PC-9 (cell line): ENCODE measurements at regions of chr14 and their contacts with region 1.

Region 1: DNA sequence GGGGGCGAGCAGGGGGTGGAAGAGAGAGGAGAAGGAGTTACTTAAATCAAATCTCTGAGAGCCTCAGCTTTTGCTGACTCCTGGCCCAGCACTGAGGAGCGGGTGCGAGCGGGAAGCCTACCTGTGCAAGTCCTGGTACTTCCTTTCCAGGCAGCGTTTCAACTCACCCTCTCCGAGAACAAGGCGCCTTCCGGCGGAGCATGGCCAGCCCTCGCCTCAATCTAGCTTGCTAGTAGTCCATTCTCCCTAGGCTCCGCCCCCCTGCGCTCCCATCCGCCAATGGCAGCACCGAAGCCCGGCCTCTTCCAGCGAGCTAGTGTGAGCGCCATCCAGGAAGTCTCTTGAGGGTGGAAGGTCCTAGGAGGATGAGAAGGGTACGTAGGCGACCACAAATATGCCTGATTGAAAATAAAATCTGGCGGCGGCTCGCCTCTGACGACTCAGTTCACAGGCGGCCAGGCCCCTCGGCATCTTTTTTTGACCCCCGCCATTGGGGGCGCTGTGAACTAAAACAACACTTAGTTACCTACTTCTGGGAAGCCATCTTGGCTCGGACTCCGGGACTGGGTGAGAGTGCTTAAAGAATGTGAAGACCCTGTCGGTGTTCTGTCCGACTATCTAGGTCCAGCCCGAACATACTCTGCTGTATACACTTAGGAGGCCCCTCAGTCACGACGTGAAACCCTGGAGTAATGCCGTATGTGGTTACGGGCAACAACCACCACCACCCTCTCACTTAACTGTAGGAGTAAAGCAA is at the start of gene CHD8:
- DNase-seq: peak; percentile 97
- H3K4me3 ChIP-seq: peak within 1 kb of the TSS; percentile 94
- H3K27ac ChIP-seq: peak within 1 kb of the TSS; percentile 92
- H3K4me1 ChIP-seq: no peaks in the 10 kb centered on the region; the same call in 1 of the 2 replicates
- H3K27me3 ChIP-seq: no peaks in the 10 kb centered on the region
- CTCF ChIP-seq: peak; percentile 71; the same call in 1 of the 2 replicates
- total RNA-seq, gene CHD8: 57.3 and 58.7 TPM in 2 replicates

Region 2: DNA sequence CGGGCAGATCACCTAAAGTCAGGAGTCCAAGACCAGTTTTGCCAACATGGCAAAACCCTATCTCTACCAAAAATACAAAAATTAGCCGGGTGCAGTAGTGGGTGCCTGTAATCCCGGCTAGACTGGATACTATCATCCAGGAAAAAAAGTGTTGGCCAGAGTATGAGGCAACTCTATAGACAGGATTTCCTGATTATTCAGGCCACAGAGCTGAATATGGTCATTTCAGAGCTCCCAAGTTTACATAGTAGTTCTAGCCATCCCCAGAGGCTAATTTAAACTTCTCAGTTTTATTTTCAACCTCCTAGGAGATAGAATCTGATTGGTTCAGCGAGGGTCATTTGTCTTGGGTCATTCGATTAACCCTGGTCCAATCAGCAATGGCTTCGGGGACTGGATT is 168.9 kb before region 1 on chr14:
- CTCF ChIA-PET with region 1: no interaction called
- POLR2A ChIA-PET with region 1: no interaction called
- intact Hi-C with region 1: no loop called
- DNase-seq: no peak
- H3K4me3 ChIP-seq: no peak overlapping the region
- H3K27ac ChIP-seq: no peak overlapping the region
- H3K4me1 ChIP-seq: no peaks in the 10 kb centered on the region
- H3K27me3 ChIP-seq: no peaks in the 10 kb centered on the region
- CTCF ChIP-seq: no peak

Region 3: GRCh38 chr14:21383848-21384493 is 72.1 kb before region 1 on chr14 and contains the start of gene SUPT16H:
- CTCF ChIA-PET with region 1: no interaction called
- POLR2A ChIA-PET with region 1: no interaction called
- intact Hi-C with region 1: loop called (anchors 2 kb)
- DNase-seq: peak; percentile 81 to 83
- H3K4me3 ChIP-seq: peak within 1 kb of the TSS; percentile 92
- H3K27ac ChIP-seq: peak within 1 kb of the TSS; percentile 73
- H3K4me1 ChIP-seq: peaks cover 7% of the 10 kb centered on the region; the same call in 1 of the 2 replicates
- H3K27me3 ChIP-seq: no peaks in the 10 kb centered on the region
- CTCF ChIP-seq: no peak
- total RNA-seq, gene SUPT16H: 57.2 and 65.4 TPM in 2 replicates

Region 4: GRCh38 chr14:21437063-21437901 is 18.8 kb before region 1 on chr14:
- CTCF ChIA-PET with region 1: interaction called, 8 read pairs
- POLR2A ChIA-PET with region 1: interaction called, 13 read pairs
- intact Hi-C with region 1: loop called (anchors 1 kb)
- DNase-seq: peak; percentile 92 to 94
- H3K4me3 ChIP-seq: peak overlapping the region; percentile 71
- H3K27ac ChIP-seq: peak overlapping the region; percentile 79
- H3K4me1 ChIP-seq: peaks cover 19% of the 10 kb centered on the region
- H3K27me3 ChIP-seq: no peaks in the 10 kb centered on the region
- CTCF ChIP-seq: no peak

Region 5: GRCh38 chr14:21476925-21477681 is 21.0 kb after region 1 on chr14 and contains the starts of genes RAB2B and TOX4:
- CTCF ChIA-PET with region 1: interaction called, 3 read pairs
- POLR2A ChIA-PET with region 1: no interaction called
- intact Hi-C with region 1: loop called (anchors 1 kb)
- DNase-seq: peak; percentile 91 to 92
- H3K4me3 ChIP-seq: peak within 1 kb of the TSS; percentile 92
- H3K27ac ChIP-seq: peak within 1 kb of the TSS; percentile 80
- H3K4me1 ChIP-seq: peaks cover 16% of the 10 kb centered on the region
- H3K27me3 ChIP-seq: no peaks in the 10 kb centered on the region
- CTCF ChIP-seq: peak; percentile 77
- total RNA-seq, gene RAB2B: 12.2 and 12.8 TPM in 2 replicates
- total RNA-seq, gene TOX4: 32.9 and 50.6 TPM in 2 replicates

Region 6: GRCh38 chr14:21525962-21526671 is 70.0 kb after region 1 on chr14 and contains the start of gene SALL2:
- CTCF ChIA-PET with region 1: no interaction called
- POLR2A ChIA-PET with region 1: interaction called, 11 read pairs
- intact Hi-C with region 1: no loop called
- DNase-seq: peak; percentile 35 to 61
- H3K4me3 ChIP-seq: peak within 1 kb of the TSS; percentile 57; the same call in 1 of the 2 replicates
- H3K27ac ChIP-seq: no peak within 1 kb of the TSS
- H3K4me1 ChIP-seq: peaks cover 21% of the 10 kb centered on the region
- H3K27me3 ChIP-seq: no peaks in the 10 kb centered on the region
- CTCF ChIP-seq: no peak
- total RNA-seq, gene SALL2: 10.3 and 10.9 TPM in 2 replicates

Region 7: GRCh38 chr14:21557084-21557901 is 101.2 kb after region 1 on chr14:
- CTCF ChIA-PET with region 1: interaction called, 7 read pairs
- POLR2A ChIA-PET with region 1: no interaction called
- intact Hi-C with region 1: loop called (anchors 1 kb)
- DNase-seq: peak; percentile 57 to 77
- H3K4me3 ChIP-seq: peak overlapping the region; percentile 6; the same call in 1 of the 2 replicates
- H3K27ac ChIP-seq: no peak overlapping the region
- H3K4me1 ChIP-seq: no peaks in the 10 kb centered on the region; the same call in 1 of the 2 replicates
- H3K27me3 ChIP-seq: no peaks in the 10 kb centered on the region
- CTCF ChIP-seq: peak; percentile 79